Mammary epithelial cell (primary cell): ENCODE measurements at regions of chr1 and their contacts with region 1.

Region 1: DNA sequence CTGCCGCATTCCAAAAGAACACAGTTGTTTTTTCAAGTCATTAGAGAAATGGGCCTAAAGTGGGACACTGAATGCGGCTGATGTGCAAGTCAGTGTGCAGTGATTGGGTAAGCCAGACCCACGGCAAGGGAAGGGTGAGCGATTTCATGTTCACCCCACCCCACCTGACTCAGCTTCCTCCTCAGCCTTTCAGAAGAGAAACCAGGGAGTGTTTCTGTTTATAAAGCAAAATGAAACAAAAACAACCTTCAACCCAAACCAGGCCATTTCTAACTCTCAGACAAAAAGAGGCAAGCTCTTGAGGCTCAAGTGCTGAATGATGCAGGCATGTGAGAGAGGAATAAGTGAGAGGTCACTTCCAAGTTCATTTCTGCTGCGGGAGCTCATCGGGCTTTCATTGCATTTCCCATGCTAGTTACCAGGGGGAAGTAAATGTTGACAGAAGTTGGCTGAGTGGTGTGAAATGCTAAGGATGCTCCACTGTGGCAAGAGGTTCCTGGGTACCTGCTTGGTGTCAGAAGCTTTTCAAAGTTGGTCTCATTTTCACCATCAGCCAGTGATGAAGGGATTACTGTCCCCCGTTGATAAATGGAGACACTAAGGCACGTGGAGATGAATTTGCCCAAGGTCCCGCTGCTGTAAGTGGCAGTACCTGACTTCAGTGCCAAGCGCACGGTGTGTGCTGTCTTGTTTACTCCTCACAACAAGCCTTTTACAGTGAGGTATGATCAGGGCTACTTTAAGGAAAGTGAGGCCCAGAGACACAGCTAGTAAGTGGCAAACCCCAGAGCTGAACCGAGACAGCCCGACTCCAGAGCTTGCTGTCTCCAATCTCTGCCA is 29.1 kb downstream of the STPG1 start:
- DNase-seq: peak; percentile 89
- H3K4me3 ChIP-seq: no peak overlapping the region
- H3K27ac ChIP-seq: peak overlapping the region; percentile 56
- H3K4me1 ChIP-seq: peaks cover 35% of the 10 kb centered on the region
- H3K27me3 ChIP-seq: no peaks in the 10 kb centered on the region
- CTCF ChIP-seq: no peak

Region 2: GRCh38 chr1:24080131-24080530 is 304.3 kb before region 1 on chr1:
- CTCF ChIA-PET with region 1: no interaction called
- dilution Hi-C with region 1: loop called (anchors 5 kb)
- in situ Hi-C with region 1: no loop called
- intact Hi-C with region 1: no loop called
- DNase-seq: no peak
- H3K4me3 ChIP-seq: no peak overlapping the region
- H3K27ac ChIP-seq: no peak overlapping the region
- H3K4me1 ChIP-seq: no peaks in the 10 kb centered on the region
- H3K27me3 ChIP-seq: no peaks in the 10 kb centered on the region
- CTCF ChIP-seq: no peak

Region 3: GRCh38 chr1:24308365-24309015 is 76.0 kb before region 1 on chr1:
- CTCF ChIA-PET with region 1: no interaction called
- dilution Hi-C with region 1: loop called (anchors 5 kb)
- in situ Hi-C with region 1: no loop called
- intact Hi-C with region 1: no loop called
- DNase-seq: no peak
- H3K4me3 ChIP-seq: no peak overlapping the region
- H3K27ac ChIP-seq: no peak overlapping the region
- H3K4me1 ChIP-seq: peaks cover 16% of the 10 kb centered on the region
- H3K27me3 ChIP-seq: no peaks in the 10 kb centered on the region
- CTCF ChIP-seq: peak; percentile 11 to 31

Region 4: DNA sequence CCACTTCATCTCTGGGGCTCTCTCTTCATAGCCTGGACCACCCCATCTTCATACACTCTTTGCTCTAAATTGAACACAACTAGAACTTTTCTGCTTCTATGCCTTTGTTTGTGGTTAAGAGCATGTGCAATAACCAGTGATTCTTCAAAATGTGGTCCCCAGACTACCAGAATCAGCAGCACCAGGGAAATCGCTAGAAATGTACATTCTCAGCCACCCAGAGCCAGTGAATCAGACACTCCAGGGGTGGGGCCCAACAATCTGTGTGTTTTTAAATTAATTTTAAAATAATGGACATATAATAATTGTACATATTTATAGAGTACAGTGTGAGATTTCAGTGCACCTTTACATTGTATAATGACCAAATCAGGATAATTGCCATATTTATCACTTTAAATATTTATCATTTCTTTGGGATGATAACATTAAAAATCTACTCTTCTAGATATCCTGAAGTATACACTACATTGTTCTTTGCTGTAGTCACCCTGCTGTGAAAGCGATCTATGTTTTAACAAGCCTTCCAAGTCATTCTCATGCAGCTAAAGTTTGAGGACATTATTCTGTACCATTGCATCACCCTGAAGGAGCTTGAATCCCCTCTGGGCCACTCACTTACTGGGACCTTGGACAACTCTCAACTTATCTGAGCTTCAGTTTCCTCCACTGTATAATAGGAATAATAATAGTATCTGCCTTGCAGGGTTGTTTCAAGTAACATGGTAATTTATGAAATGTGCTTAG is 54.5 kb before region 1 on chr1:
- CTCF ChIA-PET with region 1: no interaction called
- dilution Hi-C with region 1: loop called (anchors 5 kb)
- in situ Hi-C with region 1: no loop called
- intact Hi-C with region 1: no loop called
- DNase-seq: peak; percentile 60
- H3K4me3 ChIP-seq: no peak overlapping the region
- H3K27ac ChIP-seq: peak overlapping the region; percentile 27
- H3K4me1 ChIP-seq: peaks cover 23% of the 10 kb centered on the region
- H3K27me3 ChIP-seq: no peaks in the 10 kb centered on the region
- CTCF ChIP-seq: no peak

Region 5: GRCh38 chr1:25099343-25099951 is 715.0 kb after region 1 on chr1:
- CTCF ChIA-PET with region 1: no interaction called
- dilution Hi-C with region 1: no loop called
- in situ Hi-C with region 1: no loop called
- intact Hi-C with region 1: no loop called
- DNase-seq: no peak
- H3K4me3 ChIP-seq: no peak overlapping the region
- H3K27ac ChIP-seq: no peak overlapping the region
- H3K4me1 ChIP-seq: no peaks in the 10 kb centered on the region
- H3K27me3 ChIP-seq: peaks cover 2% of the 10 kb centered on the region
- CTCF ChIP-seq: no peak